ENCODE measurements at regions of chr7 and their contacts with region 1.

Region 1: DNA sequence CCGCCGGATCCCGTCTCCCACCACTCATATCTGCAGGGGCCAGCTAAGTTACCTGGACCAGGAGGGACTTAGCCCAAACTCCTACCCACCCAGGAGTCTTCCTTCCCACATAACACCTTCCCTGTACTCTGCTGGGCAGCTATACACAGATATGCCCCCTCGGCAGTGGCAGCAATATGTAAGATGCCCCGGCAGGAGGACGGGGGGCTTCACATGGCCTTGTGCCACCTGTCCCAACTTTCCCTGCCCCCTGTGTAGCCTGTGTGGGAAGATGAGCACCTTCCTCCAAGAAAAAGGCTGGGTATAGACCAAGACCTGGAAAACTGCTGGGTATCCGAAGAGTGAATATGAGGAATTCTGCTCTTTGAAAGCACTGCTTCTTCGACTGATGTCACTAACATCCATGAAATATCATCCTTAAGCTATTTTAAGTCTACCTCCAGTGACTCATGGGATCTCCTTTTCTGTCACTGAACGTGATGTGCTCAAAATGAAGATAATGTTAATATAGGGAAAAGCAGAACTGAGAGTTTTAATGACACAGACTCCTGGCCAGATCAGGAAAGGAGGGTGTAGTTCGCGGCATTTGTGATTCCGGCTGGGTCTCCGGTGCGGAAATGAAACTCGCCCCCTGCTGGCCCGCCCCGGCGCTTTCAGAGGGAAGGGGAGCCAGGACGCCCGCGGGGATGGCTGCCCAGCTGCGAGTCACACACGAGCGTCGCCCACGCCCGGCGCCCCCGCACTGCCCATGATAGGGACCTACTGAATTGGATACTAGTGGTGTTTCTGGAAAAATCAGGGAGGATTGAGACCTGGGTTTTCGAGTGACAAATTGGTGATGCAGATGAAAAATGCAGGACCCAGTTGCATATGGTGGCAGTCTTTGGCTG is 256.9 kb upstream of the NFE2L3 start:
- DNase-seq: peak; percentile 90
- H3K4me3 Mint-ChIP-seq: peak overlapping the region; percentile 75
- H3K27ac Mint-ChIP-seq: no peak overlapping the region
- H3K4me1 Mint-ChIP-seq: peaks cover 25% of the 10 kb centered on the region
- H3K27me3 Mint-ChIP-seq: peaks cover 17% of the 10 kb centered on the region

Region 2: DNA sequence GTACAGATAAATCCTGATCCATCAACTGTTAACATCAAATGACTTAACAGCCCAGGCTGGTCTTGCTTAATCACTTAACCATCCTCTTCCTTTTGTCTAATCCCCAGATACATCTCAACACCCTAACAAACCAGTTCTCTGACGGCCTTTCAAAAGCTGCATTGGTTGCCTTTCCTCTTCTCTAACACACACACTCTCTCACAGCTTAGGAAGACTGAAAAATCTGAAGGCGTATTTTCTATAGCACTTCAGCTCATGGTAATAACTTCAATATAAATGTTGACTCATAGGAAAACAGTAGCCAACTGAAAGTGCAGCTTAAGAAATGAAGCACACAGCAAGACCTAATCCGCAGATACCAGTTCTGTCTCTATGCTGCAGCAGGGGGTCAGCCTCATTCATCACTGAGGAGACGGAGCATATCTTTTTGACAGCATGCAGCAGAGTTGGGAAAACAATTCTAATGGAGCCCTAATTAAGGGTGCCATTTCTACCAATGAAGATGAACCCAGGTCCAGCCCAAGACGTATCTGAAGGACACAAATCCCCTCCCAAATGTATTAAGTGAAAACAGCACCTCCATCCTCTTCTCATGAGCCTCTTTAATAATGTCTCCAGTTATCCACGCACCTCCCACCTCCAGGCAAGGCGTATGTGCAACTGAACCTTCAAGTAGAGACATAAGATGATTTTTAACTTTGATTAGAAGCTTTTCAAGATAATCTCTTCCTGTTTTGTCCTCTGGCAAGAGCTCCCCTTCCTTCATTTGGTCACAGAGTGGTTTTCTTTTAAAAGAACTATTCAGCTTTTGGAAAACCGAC is 45.1 kb after region 1 on chr7:
- intact Hi-C with region 1: loop called (anchors 2 kb)
- DNase-seq: no peak
- H3K4me3 Mint-ChIP-seq: peak overlapping the region; percentile 53
- H3K27ac Mint-ChIP-seq: peak overlapping the region; percentile 67
- H3K4me1 Mint-ChIP-seq: peaks cover 15% of the 10 kb centered on the region
- H3K27me3 Mint-ChIP-seq: peaks cover 16% of the 10 kb centered on the region

Region 3: DNA sequence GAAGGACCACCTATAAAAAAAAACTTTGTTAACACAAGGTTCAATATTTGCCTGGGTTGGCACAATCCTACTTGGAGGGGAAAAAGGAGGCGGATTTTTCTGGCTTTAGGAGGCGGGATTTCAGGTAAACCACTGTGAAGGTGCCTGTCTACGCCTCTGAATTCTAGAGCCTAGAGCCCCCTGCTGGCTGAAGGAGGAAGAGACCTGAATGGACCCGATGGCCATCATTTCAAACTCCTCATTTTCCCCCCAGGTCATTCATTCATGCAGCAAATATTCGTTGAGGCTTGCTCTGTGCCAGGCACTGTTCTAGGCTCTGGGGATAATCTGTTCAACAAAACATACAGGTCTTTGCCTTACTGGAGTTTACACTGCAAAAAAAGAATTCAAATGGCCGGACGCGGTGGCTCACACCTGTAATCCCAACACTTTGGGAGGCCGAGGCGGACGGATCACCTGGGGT is 166.6 kb after region 1 on chr7:
- intact Hi-C with region 1: loop called (anchors 1 kb)
- DNase-seq: peak; percentile 91
- H3K4me3 Mint-ChIP-seq: no peak overlapping the region
- H3K27ac Mint-ChIP-seq: no peak overlapping the region
- H3K4me1 Mint-ChIP-seq: peaks cover 5% of the 10 kb centered on the region
- H3K27me3 Mint-ChIP-seq: peaks cover 23% of the 10 kb centered on the region

Region 4: GRCh38 chr7:26284995-26285632 is 390.0 kb after region 1 on chr7:
- intact Hi-C with region 1: loop called (anchors 5 kb)
- DNase-seq: peak; percentile 70
- H3K4me3 Mint-ChIP-seq: no peak overlapping the region
- H3K27ac Mint-ChIP-seq: no peak overlapping the region
- H3K4me1 Mint-ChIP-seq: peaks cover 7% of the 10 kb centered on the region
- H3K27me3 Mint-ChIP-seq: peaks cover 7% of the 10 kb centered on the region

Region 5: GRCh38 chr7:26667500-26668133 is 772.5 kb after region 1 on chr7:
- intact Hi-C with region 1: loop called (anchors 2 kb)
- DNase-seq: peak; percentile 89
- H3K4me3 Mint-ChIP-seq: no peak overlapping the region
- H3K27ac Mint-ChIP-seq: no peak overlapping the region
- H3K4me1 Mint-ChIP-seq: peaks cover 10% of the 10 kb centered on the region
- H3K27me3 Mint-ChIP-seq: peaks cover 40% of the 10 kb centered on the region